Mammary epithelial cell (primary cell): ENCODE measurements at regions of chr9 and their contacts with region 1.

Region 1: DNA sequence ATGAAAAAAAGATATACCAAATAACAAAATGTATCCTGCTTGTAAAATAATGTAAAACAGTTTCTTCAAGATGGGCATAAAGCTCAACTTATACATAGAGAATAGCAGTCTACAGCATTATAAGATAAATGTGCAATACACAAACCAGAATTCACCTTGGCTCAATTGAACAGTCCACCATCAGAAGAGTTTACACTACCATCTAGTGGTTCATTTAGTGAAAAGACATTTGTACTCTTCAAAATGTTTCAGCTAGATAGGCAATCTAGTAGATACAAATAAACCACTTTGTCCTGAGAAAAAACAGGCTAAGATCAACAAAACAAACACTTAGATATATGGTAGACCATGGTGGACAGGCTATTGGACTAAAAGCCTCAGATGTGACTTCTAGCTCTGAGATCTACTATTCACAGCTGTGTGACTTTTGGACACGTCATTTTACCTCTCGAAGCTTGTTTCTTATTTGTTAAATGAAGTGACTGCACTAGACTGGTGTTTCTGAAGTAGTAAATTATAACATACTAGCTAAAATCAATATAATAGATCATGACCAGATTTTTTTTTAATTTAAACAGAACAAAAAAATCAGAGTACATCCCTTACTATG is 22.1 kb upstream of the TPD52L3 start:
- DNase-seq: peak; percentile 46
- H3K4me3 ChIP-seq: no peak overlapping the region
- H3K27ac ChIP-seq: no peak overlapping the region
- H3K4me1 ChIP-seq: peaks cover 8% of the 10 kb centered on the region
- H3K27me3 ChIP-seq: no peaks in the 10 kb centered on the region
- CTCF ChIP-seq: peak; percentile 52 to 64

Region 2: DNA sequence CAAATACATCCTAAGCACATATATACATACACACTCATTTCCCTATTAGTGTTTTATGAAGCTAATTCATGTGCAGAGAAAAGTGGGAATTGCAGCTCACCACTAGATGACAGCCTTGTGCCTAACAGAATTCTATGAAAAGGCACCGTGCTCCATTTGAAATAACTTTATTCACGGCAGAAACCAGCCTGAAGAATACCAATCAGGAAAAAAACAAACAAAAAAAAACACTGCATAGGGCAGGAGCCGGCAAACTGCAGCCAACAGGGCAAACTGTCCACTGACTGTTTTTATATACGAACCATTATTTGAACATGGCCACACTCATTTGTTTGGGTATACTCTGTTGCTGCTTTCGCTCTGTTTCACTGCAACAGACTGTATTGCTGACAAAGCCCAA is 506.7 kb before region 1 on chr9:
- CTCF ChIA-PET with region 1: no interaction called
- dilution Hi-C with region 1: no loop called
- in situ Hi-C with region 1: loop called in 1 of 2 experiments (anchors 25 kb)
- intact Hi-C with region 1: loop called (anchors 1 kb)
- DNase-seq: peak; percentile 42
- H3K4me3 ChIP-seq: no peak overlapping the region
- H3K27ac ChIP-seq: no peak overlapping the region
- H3K4me1 ChIP-seq: no peaks in the 10 kb centered on the region
- H3K27me3 ChIP-seq: no peaks in the 10 kb centered on the region
- CTCF ChIP-seq: peak; percentile 87 to 93

Region 3: GRCh38 chr9:5886114-5886939 is 419.7 kb before region 1 on chr9:
- CTCF ChIA-PET with region 1: interaction called, 5 read pairs
- dilution Hi-C with region 1: no loop called
- in situ Hi-C with region 1: loop called (anchors 10 to 25 kb)
- intact Hi-C with region 1: loop called (anchors 1 kb)
- DNase-seq: peak; percentile 58
- H3K4me3 ChIP-seq: no peak overlapping the region
- H3K27ac ChIP-seq: no peak overlapping the region
- H3K4me1 ChIP-seq: peaks cover 7% of the 10 kb centered on the region
- H3K27me3 ChIP-seq: no peaks in the 10 kb centered on the region
- CTCF ChIP-seq: peak; percentile 98

Region 4: GRCh38 chr9:6024020-6024554 is 282.0 kb before region 1 on chr9:
- CTCF ChIA-PET with region 1: no interaction called
- dilution Hi-C with region 1: no loop called
- in situ Hi-C with region 1: no loop called
- intact Hi-C with region 1: no loop called
- DNase-seq: no peak
- H3K4me3 ChIP-seq: no peak overlapping the region
- H3K27ac ChIP-seq: no peak overlapping the region
- H3K4me1 ChIP-seq: no peaks in the 10 kb centered on the region
- H3K27me3 ChIP-seq: no peaks in the 10 kb centered on the region
- CTCF ChIP-seq: peak; percentile 53 to 54

Region 5: GRCh38 chr9:6106576-6107339 is 199.3 kb before region 1 on chr9:
- CTCF ChIA-PET with region 1: no interaction called
- dilution Hi-C with region 1: no loop called
- in situ Hi-C with region 1: no loop called
- intact Hi-C with region 1: loop called (anchors 2 kb)
- DNase-seq: peak; percentile 70
- H3K4me3 ChIP-seq: no peak overlapping the region
- H3K27ac ChIP-seq: peak overlapping the region; percentile 67
- H3K4me1 ChIP-seq: peaks cover 45% of the 10 kb centered on the region
- H3K27me3 ChIP-seq: no peaks in the 10 kb centered on the region
- CTCF ChIP-seq: peak; percentile 32 to 71

Region 6: GRCh38 chr9:6184749-6185645 is 121.1 kb before region 1 on chr9:
- CTCF ChIA-PET with region 1: no interaction called
- dilution Hi-C with region 1: no loop called
- in situ Hi-C with region 1: loop called in 1 of 2 experiments (anchors 25 kb)
- intact Hi-C with region 1: no loop called
- DNase-seq: no peak
- H3K4me3 ChIP-seq: no peak overlapping the region
- H3K27ac ChIP-seq: no peak overlapping the region
- H3K4me1 ChIP-seq: no peaks in the 10 kb centered on the region
- H3K27me3 ChIP-seq: no peaks in the 10 kb centered on the region
- CTCF ChIP-seq: no peak

Region 7: GRCh38 chr9:6197330-6197729 is 108.7 kb before region 1 on chr9:
- CTCF ChIA-PET with region 1: interaction called, 3 read pairs
- dilution Hi-C with region 1: no loop called
- in situ Hi-C with region 1: loop called in 1 of 2 experiments (anchors 25 kb)
- intact Hi-C with region 1: loop called (anchors 1 kb)
- DNase-seq: peak; percentile 24
- H3K4me3 ChIP-seq: no peak overlapping the region
- H3K27ac ChIP-seq: no peak overlapping the region
- H3K4me1 ChIP-seq: peaks cover 8% of the 10 kb centered on the region
- H3K27me3 ChIP-seq: no peaks in the 10 kb centered on the region
- CTCF ChIP-seq: peak; percentile 36 to 54

Region 8: DNA sequence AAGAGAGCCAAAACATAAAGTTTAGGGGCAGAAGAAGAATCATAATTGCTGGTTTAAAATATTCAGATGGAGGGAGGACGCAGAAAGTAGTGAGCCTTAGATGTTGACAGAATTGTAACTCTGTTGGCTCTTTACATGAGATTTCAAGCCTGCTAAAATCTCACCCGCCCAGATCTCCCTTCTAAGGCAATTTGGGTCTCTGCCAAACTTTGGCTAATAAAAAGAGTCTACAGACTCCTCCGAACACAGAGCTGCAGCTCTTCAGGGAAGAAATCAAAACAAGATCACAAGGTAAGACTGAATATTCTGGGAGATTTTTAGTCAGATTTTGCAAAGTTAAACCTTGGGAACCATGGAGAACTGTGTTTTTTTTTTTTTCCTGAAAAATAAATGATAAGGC is 90.5 kb before region 1 on chr9 and contains the start of gene IL33:
- CTCF ChIA-PET with region 1: no interaction called
- dilution Hi-C with region 1: no loop called
- in situ Hi-C with region 1: no loop called
- intact Hi-C with region 1: loop called (anchors 5 kb)
- DNase-seq: no peak
- H3K4me3 ChIP-seq: no peak within 1 kb of the TSS
- H3K27ac ChIP-seq: no peak within 1 kb of the TSS
- H3K4me1 ChIP-seq: no peaks in the 10 kb centered on the region
- H3K27me3 ChIP-seq: no peaks in the 10 kb centered on the region
- CTCF ChIP-seq: no peak
- total RNA-seq, gene IL33: 0.50 to 0.94 TPM

Region 9: DNA sequence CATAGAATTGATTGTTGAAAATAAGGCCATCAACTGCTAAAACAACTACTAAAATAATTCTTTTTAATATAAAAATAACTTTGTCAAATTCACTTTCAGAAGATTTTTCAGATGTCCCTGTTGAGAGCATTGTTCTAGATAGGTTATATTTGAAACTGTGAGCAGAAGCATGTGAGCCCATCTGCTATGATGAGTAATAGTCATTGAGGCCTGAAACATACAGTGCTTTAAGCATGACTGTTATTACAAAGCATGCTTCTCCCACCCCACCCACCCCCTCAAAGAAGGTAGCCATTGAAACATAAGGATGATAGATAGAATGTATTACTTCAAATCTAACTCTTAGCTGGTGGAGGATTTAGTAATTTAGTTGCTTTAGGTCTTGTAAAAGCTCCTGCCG is 192.9 kb after region 1 on chr9:
- CTCF ChIA-PET with region 1: no interaction called
- dilution Hi-C with region 1: no loop called
- in situ Hi-C with region 1: no loop called
- intact Hi-C with region 1: no loop called
- DNase-seq: peak; percentile 60
- H3K4me3 ChIP-seq: no peak overlapping the region
- H3K27ac ChIP-seq: peak overlapping the region; percentile 58
- H3K4me1 ChIP-seq: no peaks in the 10 kb centered on the region
- H3K27me3 ChIP-seq: no peaks in the 10 kb centered on the region
- CTCF ChIP-seq: no peak

Region 10: GRCh38 chr9:6852243-6852963 is 546.3 kb after region 1 on chr9:
- CTCF ChIA-PET with region 1: no interaction called
- dilution Hi-C with region 1: no loop called
- in situ Hi-C with region 1: no loop called
- intact Hi-C with region 1: no loop called
- DNase-seq: peak; percentile 42
- H3K4me3 ChIP-seq: no peak overlapping the region
- H3K27ac ChIP-seq: no peak overlapping the region
- H3K4me1 ChIP-seq: peaks cover 8% of the 10 kb centered on the region
- H3K27me3 ChIP-seq: no peaks in the 10 kb centered on the region
- CTCF ChIP-seq: no peak